Sigmoid colon (tissue), 7 donors: ENCODE measurements at regions of chr19 and their contacts with region 1.

Region 1: GRCh38 chr19:3035542-3036118 is 6.5 kb upstream of the TLE2 start:
- DNase-seq: peak; percentile 100
- H3K4me3 ChIP-seq: peak overlapping the region; percentile 43 to 66 (median 49)
- H3K27ac ChIP-seq: peak overlapping the region; percentile 81 to 96 (median 93)
- H3K4me1 ChIP-seq: peaks cover 0 to 21% (median 17%) of the 10 kb centered on the region in 4 donors
- H3K27me3 ChIP-seq: no peaks in the 10 kb centered on the region
- CTCF ChIP-seq: no peak
- EP300 ChIP-seq: no peak
- POLR2A ChIP-seq: peak in 1 of 2 donors; percentile 42

Region 2: GRCh38 chr19:2977686-2978453 is 57.8 kb before region 1 on chr19:
- intact Hi-C with region 1: loop called (anchors 2 kb)
- DNase-seq: peak; percentile 68
- H3K4me3 ChIP-seq: peak overlapping the region in 3 of 4 donors; percentile 49 to 55 (median 51)
- H3K27ac ChIP-seq: peak overlapping the region; percentile 44 to 62 (median 53)
- H3K4me1 ChIP-seq: peaks cover 0 to 35% (median 30%) of the 10 kb centered on the region in 4 donors
- H3K27me3 ChIP-seq: no peaks in the 10 kb centered on the region
- CTCF ChIP-seq: no peak
- EP300 ChIP-seq: no peak
- POLR2A ChIP-seq: no peak